Tibial artery (tissue), 4 donors: ENCODE measurements at regions of chr16 and their contacts with region 1.

Region 1: DNA sequence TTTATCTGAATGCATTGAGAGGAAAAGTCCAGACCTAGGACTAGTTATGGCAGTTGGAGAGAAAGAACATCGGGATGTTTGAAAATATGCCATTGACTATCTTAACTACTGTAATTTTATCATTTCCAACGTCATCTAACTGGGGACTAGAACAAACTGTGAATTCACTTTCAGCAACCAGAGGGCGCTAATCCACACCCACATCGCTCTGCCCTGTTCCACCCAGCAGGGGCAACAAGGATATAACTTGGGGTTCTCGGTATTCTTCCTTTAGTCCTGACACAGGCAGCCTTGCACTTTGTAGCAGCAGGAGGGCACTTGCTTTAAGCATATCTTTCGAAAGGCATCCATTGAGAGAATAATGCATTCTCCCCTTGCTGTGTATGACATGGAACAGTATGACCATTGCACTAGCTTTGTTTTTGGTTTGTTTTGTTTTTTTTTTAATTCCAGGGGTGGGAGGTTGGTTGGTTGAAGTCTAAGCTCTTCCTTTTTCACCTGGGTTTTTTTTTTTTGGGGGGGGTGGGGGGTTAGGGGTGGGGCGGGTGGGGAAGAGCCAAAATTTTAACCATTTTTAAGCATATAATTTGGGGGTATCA is 31.5 kb downstream of the SIAH1 start:
- DNase-seq: peak; percentile 63 to 78
- H3K4me3 ChIP-seq: no peak overlapping the region
- H3K27ac ChIP-seq: no peak overlapping the region
- H3K4me1 ChIP-seq: peaks cover 0 to 10% (median 2%) of the 10 kb centered on the region in 4 donors
- H3K27me3 ChIP-seq: no peaks in the 10 kb centered on the region
- CTCF ChIP-seq: peak; percentile 86

Region 2: DNA sequence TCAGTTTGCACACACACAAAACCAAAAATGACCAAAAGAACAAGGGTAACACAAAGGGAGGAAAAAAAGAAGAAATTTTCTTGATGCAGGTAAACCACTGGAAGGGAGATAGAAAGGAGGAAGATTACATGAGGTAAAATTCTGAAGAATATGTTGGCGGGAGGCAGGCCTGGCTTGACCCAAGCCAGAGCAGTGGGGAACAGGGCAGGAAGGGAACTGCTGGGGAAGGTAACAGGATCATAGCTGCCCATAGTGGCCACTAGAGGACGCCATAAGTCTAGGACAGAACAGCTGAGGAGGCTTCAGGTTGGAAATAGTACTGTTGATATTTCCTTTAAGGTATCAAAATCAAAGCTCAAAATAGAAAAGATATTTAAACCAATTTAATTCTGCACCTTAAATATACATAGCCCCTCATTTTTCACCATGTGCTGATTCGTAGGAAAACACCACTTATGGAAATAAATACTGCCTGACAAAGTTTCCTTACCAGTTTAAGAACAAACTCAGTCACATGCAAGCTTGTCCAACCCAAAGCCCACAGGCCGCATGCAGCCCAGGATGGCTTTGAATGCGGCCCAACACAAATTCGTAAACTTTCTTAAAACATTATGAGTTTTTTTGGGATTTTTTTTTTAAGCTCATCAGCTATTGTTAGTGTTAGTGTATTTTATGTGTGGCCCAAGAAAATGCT is 1680.2 kb before region 1 on chr16:
- intact Hi-C with region 1: loop called (anchors 5 kb)
- DNase-seq: peak in 1 of 2 donors; percentile 31
- H3K4me3 ChIP-seq: no peak overlapping the region
- H3K27ac ChIP-seq: no peak overlapping the region
- H3K4me1 ChIP-seq: no peaks in the 10 kb centered on the region
- H3K27me3 ChIP-seq: no peaks in the 10 kb centered on the region
- CTCF ChIP-seq: peak; percentile 54 to 70

Region 3: GRCh38 chr16:48225456-48225855 is 128.2 kb before region 1 on chr16:
- intact Hi-C with region 1: no loop called
- DNase-seq: no peak
- H3K4me3 ChIP-seq: no peak overlapping the region
- H3K27ac ChIP-seq: no peak overlapping the region
- H3K4me1 ChIP-seq: no peaks in the 10 kb centered on the region
- H3K27me3 ChIP-seq: no peaks in the 10 kb centered on the region
- CTCF ChIP-seq: no peak

Region 4: DNA sequence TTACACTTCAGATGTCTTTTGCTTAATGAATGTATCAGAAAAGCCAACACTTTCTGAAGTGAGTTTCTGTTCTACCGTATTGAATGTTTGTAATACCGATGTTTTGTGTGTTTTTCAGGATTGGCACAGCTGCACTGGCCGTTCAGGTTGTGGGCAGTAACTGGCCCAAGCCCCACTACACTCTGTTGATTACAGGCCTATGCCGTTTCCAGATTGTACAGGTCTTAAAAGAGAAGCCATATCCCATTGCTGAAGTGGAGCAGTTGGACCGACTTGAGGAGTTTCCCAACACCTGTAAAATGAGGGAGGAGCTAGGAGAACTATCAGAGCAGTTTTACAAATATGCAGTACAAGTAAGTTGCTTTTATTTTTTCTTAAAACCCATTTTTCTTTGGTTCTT is 101.7 kb before region 1 on chr16:
- intact Hi-C with region 1: no loop called
- DNase-seq: no peak
- H3K4me3 ChIP-seq: no peak overlapping the region
- H3K27ac ChIP-seq: no peak overlapping the region
- H3K4me1 ChIP-seq: peaks cover 0 to 13% (median 6%) of the 10 kb centered on the region in 4 donors
- H3K27me3 ChIP-seq: no peaks in the 10 kb centered on the region
- CTCF ChIP-seq: no peak

Region 5: GRCh38 chr16:48276102-48276501 is 77.6 kb before region 1 on chr16:
- intact Hi-C with region 1: no loop called
- DNase-seq: no peak
- H3K4me3 ChIP-seq: no peak overlapping the region
- H3K27ac ChIP-seq: peak overlapping the region; percentile 7 to 17
- H3K4me1 ChIP-seq: peaks cover 0 to 35% (median 21%) of the 10 kb centered on the region in 4 donors
- H3K27me3 ChIP-seq: no peaks in the 10 kb centered on the region
- CTCF ChIP-seq: no peak

Region 6: DNA sequence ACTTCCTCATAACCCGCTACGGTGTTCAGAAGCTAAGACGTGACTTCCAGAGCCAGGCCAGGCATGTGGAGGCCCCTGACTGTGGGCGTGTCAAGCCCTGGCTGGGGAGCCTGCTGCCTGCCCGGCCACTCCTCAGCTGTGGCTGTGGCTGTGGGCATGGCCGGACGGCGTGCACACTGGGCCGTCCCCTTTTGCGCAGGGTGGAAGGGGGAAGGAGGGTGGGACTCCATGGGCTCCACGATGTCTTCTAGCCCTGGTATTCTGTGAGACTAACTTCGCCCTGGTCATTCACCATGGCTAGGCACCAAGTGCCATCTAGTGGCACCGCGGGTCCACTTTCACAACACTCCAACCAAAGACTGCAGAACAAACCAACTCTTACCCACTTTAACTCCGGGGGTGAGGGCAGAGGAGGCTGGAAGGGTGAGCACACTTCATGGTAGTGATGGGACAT is 188.4 kb after region 1 on chr16:
- intact Hi-C with region 1: loop called (anchors 5 kb)
- DNase-seq: peak; percentile 70 to 83
- H3K4me3 ChIP-seq: no peak overlapping the region
- H3K27ac ChIP-seq: peak overlapping the region in 1 of 2 donors; percentile 15
- H3K4me1 ChIP-seq: peaks cover 0 to 30% (median 24%) of the 10 kb centered on the region in 4 donors
- H3K27me3 ChIP-seq: no peaks in the 10 kb centered on the region
- CTCF ChIP-seq: peak; percentile 68